ENCODE measurements at regions of chr22 and their contacts with region 1.

Region 1: GRCh38 chr22:32717337-32718240 is 83.9 kb upstream of the TIMP3 start:
- DNase-seq: no peak
- ATAC-seq: peak; percentile 64

Region 2: DNA sequence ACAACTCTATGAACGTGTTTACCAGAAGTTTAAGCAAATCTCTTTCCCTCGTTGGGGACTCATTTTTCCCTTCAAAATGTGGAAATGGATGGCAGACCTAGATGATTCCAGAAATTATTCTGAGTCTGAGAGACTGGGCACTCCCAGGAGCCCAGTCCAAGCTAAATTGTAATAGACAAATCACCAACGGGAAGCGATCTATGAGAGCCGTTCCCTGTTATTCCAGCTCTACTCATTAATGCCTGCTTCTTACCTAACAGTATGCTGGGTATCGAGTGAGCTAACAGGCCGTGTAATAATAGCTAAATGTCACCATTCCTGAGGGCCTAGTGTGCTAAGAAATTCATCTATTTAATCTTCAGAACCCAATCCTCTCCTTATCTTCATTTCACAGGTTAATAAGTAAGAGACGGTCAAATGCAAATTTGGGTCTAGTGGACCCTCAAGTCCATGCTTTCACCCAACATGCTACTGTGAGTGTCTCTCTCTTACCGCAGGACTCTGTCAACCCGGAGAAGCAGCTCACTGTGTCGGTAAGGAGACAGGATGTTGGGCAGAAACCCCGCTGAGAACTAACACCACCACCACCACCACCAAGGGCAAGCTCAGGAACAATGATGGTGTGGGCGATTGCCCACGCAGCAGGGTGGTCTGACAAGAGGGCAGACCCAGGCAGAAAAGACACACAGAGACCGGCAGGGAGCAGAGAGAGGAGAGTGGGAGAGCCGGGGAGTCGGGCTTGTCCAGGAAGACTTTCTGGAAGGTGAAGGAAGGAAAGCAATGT is 26.8 kb after region 1 on chr22:
- intact Hi-C with region 1: no loop called
- DNase-seq: no peak
- ATAC-seq: no peak

Region 3: GRCh38 chr22:32754413-32755041 is 36.9 kb after region 1 on chr22:
- intact Hi-C with region 1: no loop called
- DNase-seq: peak; percentile 75
- ATAC-seq: peak; percentile 92

Region 4: GRCh38 chr22:32764330-32765131 is 46.9 kb after region 1 on chr22:
- intact Hi-C with region 1: loop called (anchors 5 kb)
- DNase-seq: peak; percentile 81
- ATAC-seq: peak; percentile 81